Right ventricle myocardium inferior (tissue), 1 donor: ENCODE measurements at regions of chr16 and their contacts with region 1.

Region 1: DNA sequence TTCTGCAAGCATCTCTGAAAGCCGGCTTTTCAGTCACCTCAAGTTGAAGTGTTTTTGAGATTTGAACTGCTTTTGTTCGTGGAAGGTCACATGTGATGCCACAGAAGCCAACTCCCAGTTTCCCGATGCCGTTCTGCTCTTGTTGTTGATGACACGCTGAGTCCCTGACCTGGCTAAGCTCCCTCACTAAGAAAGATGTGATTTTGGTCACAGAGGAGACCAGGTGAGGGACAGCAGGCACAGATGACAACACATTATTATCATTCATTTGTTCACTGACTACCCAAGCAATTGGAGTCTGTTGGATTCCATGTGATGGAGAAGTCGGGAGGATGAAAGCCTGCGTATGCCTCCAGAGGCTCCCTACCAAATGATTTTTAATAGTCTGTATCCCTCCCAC is 822.4 kb upstream of the RBFOX1 start:
- DNase-seq: no peak
- ATAC-seq: no peak

Region 2: GRCh38 chr16:6483469-6484033 is 26.7 kb before region 1 on chr16:
- intact Hi-C with region 1: loop called (anchors 1 kb)
- DNase-seq: no peak
- ATAC-seq: no peak

Region 3: DNA sequence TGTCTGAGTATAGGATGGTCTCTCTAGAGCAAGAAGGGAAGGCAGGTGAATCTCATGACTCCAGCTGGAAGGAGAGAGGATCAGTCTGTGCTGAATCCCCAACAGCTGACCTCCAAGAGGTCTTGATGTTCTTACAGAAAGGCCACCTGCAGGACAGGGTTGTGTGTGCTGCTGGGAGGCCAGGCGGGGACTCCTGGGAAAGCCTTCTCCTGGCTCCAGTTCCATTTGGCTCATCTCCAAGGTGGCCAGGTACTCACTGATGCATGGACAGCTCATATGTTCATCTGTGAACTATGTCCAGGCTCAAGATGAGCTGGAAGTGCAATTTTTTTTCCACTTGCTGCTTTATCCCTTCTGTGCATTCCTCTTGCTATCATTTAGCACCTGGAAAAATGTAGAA is 92.1 kb after region 1 on chr16:
- intact Hi-C with region 1: no loop called
- DNase-seq: no peak
- ATAC-seq: no peak